T-cell (primary cell): ENCODE measurements at regions of chr20 and their contacts with region 1.

Region 1: DNA sequence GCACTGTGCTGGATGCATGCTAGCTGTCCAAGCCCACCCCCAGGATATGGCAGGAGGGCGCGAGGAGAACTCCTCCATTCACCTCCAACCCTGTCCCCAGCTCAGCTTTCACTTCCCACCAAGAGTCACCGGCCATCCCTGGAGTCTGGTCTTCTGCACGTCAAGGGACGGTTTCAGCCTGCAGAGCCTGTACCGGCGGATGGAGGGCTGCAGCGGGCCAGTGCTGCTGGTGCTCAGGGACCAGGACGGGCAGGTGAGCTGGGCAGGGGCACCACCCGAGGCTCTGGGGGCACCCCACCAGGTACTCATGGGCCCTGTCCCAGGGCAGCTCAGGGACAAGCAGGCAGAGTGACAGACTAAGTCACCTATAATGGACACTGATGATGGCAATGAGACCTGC is 3.0 kb downstream of the TLDC2 start:
- DNase-seq: no peak
- ATAC-seq: no peak
- H3K4me3 ChIP-seq: no peak overlapping the region
- H3K4me3 Mint-ChIP-seq: no peak overlapping the region
- H3K27ac ChIP-seq: no peak overlapping the region
- H3K27ac Mint-ChIP-seq: no peak overlapping the region
- H3K4me1 ChIP-seq: no peaks in the 10 kb centered on the region
- H3K4me1 Mint-ChIP-seq: no peaks in the 10 kb centered on the region
- H3K27me3 ChIP-seq: peaks cover 0 to 3% of the 10 kb centered on the region in 2 experiments
- H3K27me3 Mint-ChIP-seq: no peaks in the 10 kb centered on the region

Region 2: DNA sequence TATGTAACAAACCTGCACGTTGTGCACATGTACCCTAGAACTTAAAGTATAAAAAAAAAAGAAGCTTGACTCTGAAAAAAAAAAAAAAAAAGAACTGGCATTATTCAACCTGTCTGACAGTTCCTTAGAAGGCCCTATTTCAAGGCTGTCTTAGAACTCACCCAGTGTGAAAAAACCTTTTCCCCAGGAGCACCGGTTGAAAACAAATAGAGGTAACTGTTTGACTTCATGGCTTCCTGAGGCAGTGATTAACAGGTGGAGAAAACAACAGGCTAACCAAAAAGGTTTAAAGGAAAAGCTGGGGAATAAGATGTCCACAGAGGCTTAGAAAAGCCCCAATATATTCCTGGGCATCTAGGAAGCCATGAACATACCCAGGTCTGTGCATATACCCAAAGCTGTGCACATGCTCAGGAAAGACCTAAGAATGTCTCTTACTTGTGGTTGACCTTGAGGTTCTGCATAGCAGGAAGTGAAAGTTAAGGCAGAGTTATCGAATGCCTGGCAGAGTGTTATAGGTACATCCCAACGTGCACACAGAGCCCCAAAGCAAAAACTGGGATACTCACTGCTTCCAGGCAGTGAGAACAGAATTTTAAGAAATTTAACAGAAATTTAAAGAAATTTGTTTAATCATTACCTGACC is 1474.2 kb before region 1 on chr20:
- CTCF ChIA-PET with region 1: no interaction called
- POLR2A ChIA-PET with region 1: no interaction called
- DNase-seq: peak in 2 of 35 experiments; percentile 5 to 29
- ATAC-seq: peak; percentile 52 to 82 (median 72)
- H3K4me3 ChIP-seq: no peak overlapping the region
- H3K4me3 Mint-ChIP-seq: no peak overlapping the region
- H3K27ac ChIP-seq: peak overlapping the region; percentile 1
- H3K27ac Mint-ChIP-seq: peak overlapping the region in 1 of 2 donors; percentile 21
- H3K4me1 ChIP-seq: peaks cover 2 to 4% of the 10 kb centered on the region in 2 experiments
- H3K4me1 Mint-ChIP-seq: peaks cover 22 to 25% (median 24%) of the 10 kb centered on the region in 3 donors
- H3K27me3 ChIP-seq: no peaks in the 10 kb centered on the region
- H3K27me3 Mint-ChIP-seq: no peaks in the 10 kb centered on the region

Region 3: DNA sequence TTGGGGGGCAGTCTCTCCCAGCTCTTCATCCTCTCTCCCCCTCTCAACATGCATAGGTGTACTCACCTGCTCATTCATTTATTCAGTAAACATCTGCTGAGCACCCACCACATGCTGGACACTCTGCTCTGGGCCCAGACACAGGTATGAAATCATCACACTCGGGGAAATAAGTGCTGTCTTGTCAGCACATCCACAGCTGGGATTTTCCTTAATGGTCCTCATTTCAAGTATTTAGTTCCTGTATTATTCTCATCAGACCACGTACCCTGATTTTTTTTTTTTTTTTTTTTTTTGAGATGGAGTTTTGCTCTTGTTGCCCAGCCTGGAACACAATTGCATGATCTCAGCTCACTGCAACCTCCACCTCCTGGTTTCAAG is 254.0 kb before region 1 on chr20:
- CTCF ChIA-PET with region 1: no interaction called
- POLR2A ChIA-PET with region 1: interaction called in 1 of 2 experiments, 15 read pairs
- DNase-seq: no peak
- ATAC-seq: no peak
- H3K4me3 ChIP-seq: no peak overlapping the region
- H3K4me3 Mint-ChIP-seq: no peak overlapping the region
- H3K27ac ChIP-seq: no peak overlapping the region
- H3K27ac Mint-ChIP-seq: peak overlapping the region; percentile 77 to 84
- H3K4me1 ChIP-seq: peaks cover 7 to 42% of the 10 kb centered on the region in 2 experiments
- H3K4me1 Mint-ChIP-seq: peaks cover 51 to 62% (median 51%) of the 10 kb centered on the region in 3 donors
- H3K27me3 ChIP-seq: no peaks in the 10 kb centered on the region
- H3K27me3 Mint-ChIP-seq: no peaks in the 10 kb centered on the region